GM12878 (cell line): ENCODE measurements at regions of chr2 and their contacts with region 1.

Region 1: GRCh38 chr2:39492095-39492590 is 55.1 kb upstream of the MAP4K3 start:
- DNase-seq: peak; percentile 91
- ATAC-seq: peak; percentile 98
- H3K4me3 ChIP-seq: peak overlapping the region; percentile 24; the same call in 1 of the 2 replicates
- H3K27ac ChIP-seq: peak overlapping the region; percentile 67
- H3K4me1 ChIP-seq: peaks cover 21% of the 10 kb centered on the region
- H3K27me3 ChIP-seq: peaks cover 0 to 3% of the 10 kb centered on the region in 2 experiments; a peak in 2 of 4 replicates
- CTCF ChIP-seq: no peak
- EP300 ChIP-seq: peak; percentile 100
- POLR2A ChIP-seq: no peak
- RAD21 ChIP-seq: no peak; the same call in 1 of the 2 replicates

Region 2: GRCh38 chr2:39266139-39266805 is 225.9 kb before region 1 on chr2:
- CTCF ChIA-PET with region 1: no interaction called
- POLR2A ChIA-PET with region 1: no interaction called
- RAD21 ChIA-PET with region 1: no interaction called
- SMC1A ChIA-PET with region 1: no interaction called
- in situ Hi-C with region 1: no loop called
- intact Hi-C with region 1: loop called (anchors 10 kb)
- DNase-seq: peak; percentile 53
- ATAC-seq: peak; percentile 88
- H3K4me3 ChIP-seq: no peak overlapping the region
- H3K27ac ChIP-seq: peak overlapping the region; percentile 14; the same call in 1 of the 2 replicates
- H3K4me1 ChIP-seq: peaks cover 29% of the 10 kb centered on the region; the same call in 1 of the 2 replicates
- H3K27me3 ChIP-seq: no peaks in the 10 kb centered on the region
- CTCF ChIP-seq: no peak
- EP300 ChIP-seq: no peak
- POLR2A ChIP-seq: no peak
- RAD21 ChIP-seq: no peak

Region 3: DNA sequence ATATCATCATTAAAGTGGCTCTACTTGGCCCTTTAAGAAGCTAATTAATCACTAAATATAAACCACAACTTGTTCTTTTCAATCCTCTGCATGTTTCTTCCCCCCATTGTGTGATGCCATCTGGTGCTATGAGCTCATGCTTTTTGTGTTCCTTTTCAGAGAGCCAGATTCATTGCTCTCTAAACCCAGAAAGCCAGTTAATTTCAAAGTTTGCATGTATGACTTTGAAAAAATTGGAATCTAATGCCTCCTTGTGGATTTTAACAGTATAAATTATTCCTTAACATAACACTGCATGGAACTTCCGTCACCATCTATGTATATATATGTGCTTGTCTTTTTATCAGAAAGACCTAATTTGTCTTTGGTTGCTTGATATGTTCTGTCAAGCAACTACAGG is 204.7 kb after region 1 on chr2:
- CTCF ChIA-PET with region 1: no interaction called
- POLR2A ChIA-PET with region 1: no interaction called
- RAD21 ChIA-PET with region 1: no interaction called
- SMC1A ChIA-PET with region 1: no interaction called
- in situ Hi-C with region 1: no loop called
- intact Hi-C with region 1: no loop called
- DNase-seq: no peak
- ATAC-seq: no peak
- H3K4me3 ChIP-seq: no peak overlapping the region
- H3K27ac ChIP-seq: no peak overlapping the region
- H3K4me1 ChIP-seq: no peaks in the 10 kb centered on the region
- H3K27me3 ChIP-seq: no peaks in the 10 kb centered on the region
- CTCF ChIP-seq: no peak
- EP300 ChIP-seq: no peak
- POLR2A ChIP-seq: no peak
- RAD21 ChIP-seq: no peak

Region 4: GRCh38 chr2:39755466-39755865 is 263.3 kb after region 1 on chr2:
- CTCF ChIA-PET with region 1: no interaction called
- POLR2A ChIA-PET with region 1: no interaction called
- RAD21 ChIA-PET with region 1: no interaction called
- SMC1A ChIA-PET with region 1: no interaction called
- in situ Hi-C with region 1: no loop called
- intact Hi-C with region 1: no loop called
- DNase-seq: no peak
- ATAC-seq: no peak
- H3K4me3 ChIP-seq: no peak overlapping the region
- H3K27ac ChIP-seq: no peak overlapping the region
- H3K4me1 ChIP-seq: no peaks in the 10 kb centered on the region
- H3K27me3 ChIP-seq: no peaks in the 10 kb centered on the region
- CTCF ChIP-seq: no peak
- EP300 ChIP-seq: no peak
- POLR2A ChIP-seq: no peak
- RAD21 ChIP-seq: no peak